ENCODE measurements at regions of chr15 and their contacts with region 1.

Region 1: DNA sequence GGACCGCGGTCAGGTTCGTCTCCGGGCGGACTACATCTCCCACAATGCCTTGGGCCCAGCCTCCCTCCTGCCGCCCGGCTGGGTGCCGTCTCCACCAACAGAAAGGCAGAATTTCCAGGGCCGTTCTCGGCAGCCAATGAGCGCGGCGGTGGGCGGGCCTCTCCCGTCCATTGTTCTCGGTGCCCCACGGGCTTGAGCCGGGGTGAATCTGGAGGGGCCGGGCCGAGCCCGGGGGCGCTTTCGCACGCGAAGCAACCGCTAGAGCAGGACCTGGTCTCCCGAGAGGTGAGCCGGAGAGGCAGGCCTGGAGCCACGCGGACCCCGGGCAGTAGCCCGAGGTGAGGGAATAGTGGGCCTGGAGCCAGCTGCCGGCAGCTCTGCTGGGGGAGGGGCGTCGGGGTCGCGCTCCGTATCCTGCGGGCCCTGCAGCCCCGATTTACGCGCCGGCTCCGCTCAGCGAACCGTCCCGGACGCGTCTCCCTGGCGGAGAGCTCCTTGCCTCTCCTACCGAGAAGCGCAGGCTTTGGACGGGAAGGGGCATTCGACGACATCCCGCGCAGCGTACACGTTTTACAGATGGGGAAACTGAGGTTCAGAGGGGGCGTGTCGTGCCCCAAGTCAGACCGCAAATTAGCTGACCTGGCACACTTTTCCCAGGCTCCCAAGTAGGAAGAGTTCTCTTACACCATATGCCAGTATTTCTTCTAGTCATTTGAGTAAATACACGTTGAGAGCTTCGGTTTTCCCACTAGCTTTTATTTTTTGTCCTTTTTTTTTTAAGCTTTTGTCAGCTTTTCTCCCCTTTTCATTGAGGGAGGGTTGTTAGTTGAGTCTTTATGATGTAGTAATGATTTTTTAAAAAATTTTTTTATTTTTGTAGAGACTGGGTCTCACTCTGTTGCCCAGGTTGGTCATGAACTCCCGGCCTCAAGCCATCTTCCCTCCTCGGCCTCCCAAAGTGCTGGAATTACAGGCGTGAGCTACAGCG is at the start of gene ZSCAN2:
- DNase-seq: peak; percentile 98
- ATAC-seq: peak; percentile 98
- H3K4me3 ChIP-seq: peak within 1 kb of the TSS; percentile 79 to 91
- H3K27ac ChIP-seq: peak within 1 kb of the TSS in 1 of 2 donors; percentile 18
- H3K4me1 ChIP-seq: no peaks in the 10 kb centered on the region
- H3K27me3 ChIP-seq: no peaks in the 10 kb centered on the region
- total RNA-seq, gene ZSCAN2: 4.1 to 6.7 TPM

Region 2: GRCh38 chr15:84638103-84638502 is 37.0 kb after region 1 on chr15:
- intact Hi-C with region 1: loop called in 1 of 2 experiments (anchors 1 kb)
- DNase-seq: no peak
- ATAC-seq: no peak
- H3K4me3 ChIP-seq: no peak overlapping the region
- H3K27ac ChIP-seq: peak overlapping the region in 1 of 2 donors; percentile 49
- H3K4me1 ChIP-seq: peaks cover 0 to 6% of the 10 kb centered on the region in 2 donors
- H3K27me3 ChIP-seq: no peaks in the 10 kb centered on the region